ENCODE measurements at regions of chr19 and their contacts with region 1.

Region 1: GRCh38 chr19:58439576-58440554 is at the start of gene ZNF132:
- DNase-seq: peak; percentile 100
- ATAC-seq: peak; percentile 98
- H3K4me3 ChIP-seq: peak within 1 kb of the TSS; percentile 65
- H3K27ac ChIP-seq: peak within 1 kb of the TSS; percentile 61
- H3K4me1 ChIP-seq: peaks cover 3% of the 10 kb centered on the region; the same call in 1 of the 2 replicates
- H3K27me3 ChIP-seq: no peaks in the 10 kb centered on the region
- CTCF ChIP-seq: no peak
- POLR2A ChIP-seq: peak; percentile 87
- RAD21 ChIP-seq: no peak
- total RNA-seq, gene ZNF132: 8.9 and 13.6 TPM in 2 replicates

Region 2: GRCh38 chr19:58317476-58318072 is 122.3 kb before region 1 on chr19:
- CTCF ChIA-PET with region 1: no interaction called
- POLR2A ChIA-PET with region 1: no interaction called
- dilution Hi-C with region 1: no loop called
- in situ Hi-C with region 1: no loop called
- intact Hi-C with region 1: no loop called
- DNase-seq: peak; percentile 59
- ATAC-seq: peak; percentile 89
- H3K4me3 ChIP-seq: no peak overlapping the region
- H3K27ac ChIP-seq: no peak overlapping the region
- H3K4me1 ChIP-seq: no peaks in the 10 kb centered on the region
- H3K27me3 ChIP-seq: no peaks in the 10 kb centered on the region
- CTCF ChIP-seq: no peak
- POLR2A ChIP-seq: no peak
- RAD21 ChIP-seq: no peak

Region 3: DNA sequence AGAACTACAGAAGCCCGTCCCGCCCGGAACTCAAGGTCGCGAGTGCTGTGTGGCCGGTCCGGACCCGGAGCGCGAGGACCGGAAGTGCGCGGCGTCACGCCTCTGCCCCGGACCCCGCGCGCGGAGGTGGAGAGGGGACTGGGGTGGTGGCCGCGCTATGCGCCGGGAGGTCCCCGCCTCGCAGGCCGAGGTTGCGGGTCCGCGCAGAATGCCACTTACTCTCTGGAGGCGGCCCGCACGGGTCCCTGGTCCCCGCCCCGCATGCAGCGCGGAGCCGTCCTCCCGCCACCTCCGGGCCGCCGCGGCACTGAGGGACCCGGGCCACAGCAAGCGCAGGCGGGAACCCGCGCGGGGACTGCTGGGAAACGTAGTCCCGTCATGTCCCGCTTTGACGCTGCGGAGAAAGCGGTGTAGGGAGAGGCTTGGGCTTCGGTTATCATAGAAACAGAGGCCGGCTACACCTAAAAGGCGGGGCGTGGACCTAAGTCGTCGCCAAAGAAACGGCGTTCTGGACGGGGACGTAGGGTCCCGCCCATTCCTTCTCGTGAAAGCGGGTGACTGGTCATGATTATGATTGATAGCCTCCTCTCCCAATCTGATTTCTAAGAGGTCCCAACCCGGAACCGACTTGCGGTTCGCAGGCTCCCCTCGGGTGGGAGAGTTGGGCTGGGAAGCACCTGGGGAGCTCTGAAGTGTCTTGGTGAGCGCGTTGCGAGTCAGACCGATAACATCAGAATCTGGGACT is 59.0 kb before region 1 on chr19 and contains the start of gene ZNF837:
- CTCF ChIA-PET with region 1: no interaction called
- POLR2A ChIA-PET with region 1: no interaction called
- dilution Hi-C with region 1: no loop called
- in situ Hi-C with region 1: no loop called
- intact Hi-C with region 1: no loop called
- DNase-seq: peak; percentile 100
- ATAC-seq: peak; percentile 93
- H3K4me3 ChIP-seq: peak within 1 kb of the TSS; percentile 56
- H3K27ac ChIP-seq: peak within 1 kb of the TSS; percentile 66
- H3K4me1 ChIP-seq: peaks cover 13% of the 10 kb centered on the region
- H3K27me3 ChIP-seq: no peaks in the 10 kb centered on the region
- CTCF ChIP-seq: no peak
- POLR2A ChIP-seq: peak; percentile 67
- RAD21 ChIP-seq: no peak
- total RNA-seq, gene ZNF837: 0.54 and 0.56 TPM in 2 replicates

Region 4: GRCh38 chr19:58408152-58409009 is 31.5 kb before region 1 on chr19 and contains the start of gene ZNF584:
- CTCF ChIA-PET with region 1: no interaction called
- POLR2A ChIA-PET with region 1: no interaction called
- dilution Hi-C with region 1: no loop called
- in situ Hi-C with region 1: no loop called
- intact Hi-C with region 1: loop called (anchors 2 kb)
- DNase-seq: peak; percentile 93
- ATAC-seq: peak; percentile 98
- H3K4me3 ChIP-seq: peak within 1 kb of the TSS; percentile 95
- H3K27ac ChIP-seq: peak within 1 kb of the TSS; percentile 88
- H3K4me1 ChIP-seq: peaks cover 11% of the 10 kb centered on the region
- H3K27me3 ChIP-seq: no peaks in the 10 kb centered on the region
- CTCF ChIP-seq: 0 out of 2 replicates have a peak, but pooled peaks have one; percentile 9
- POLR2A ChIP-seq: peak; percentile 89
- RAD21 ChIP-seq: no peak
- total RNA-seq, gene ZNF584: 12.8 and 15.4 TPM in 2 replicates

Region 5: DNA sequence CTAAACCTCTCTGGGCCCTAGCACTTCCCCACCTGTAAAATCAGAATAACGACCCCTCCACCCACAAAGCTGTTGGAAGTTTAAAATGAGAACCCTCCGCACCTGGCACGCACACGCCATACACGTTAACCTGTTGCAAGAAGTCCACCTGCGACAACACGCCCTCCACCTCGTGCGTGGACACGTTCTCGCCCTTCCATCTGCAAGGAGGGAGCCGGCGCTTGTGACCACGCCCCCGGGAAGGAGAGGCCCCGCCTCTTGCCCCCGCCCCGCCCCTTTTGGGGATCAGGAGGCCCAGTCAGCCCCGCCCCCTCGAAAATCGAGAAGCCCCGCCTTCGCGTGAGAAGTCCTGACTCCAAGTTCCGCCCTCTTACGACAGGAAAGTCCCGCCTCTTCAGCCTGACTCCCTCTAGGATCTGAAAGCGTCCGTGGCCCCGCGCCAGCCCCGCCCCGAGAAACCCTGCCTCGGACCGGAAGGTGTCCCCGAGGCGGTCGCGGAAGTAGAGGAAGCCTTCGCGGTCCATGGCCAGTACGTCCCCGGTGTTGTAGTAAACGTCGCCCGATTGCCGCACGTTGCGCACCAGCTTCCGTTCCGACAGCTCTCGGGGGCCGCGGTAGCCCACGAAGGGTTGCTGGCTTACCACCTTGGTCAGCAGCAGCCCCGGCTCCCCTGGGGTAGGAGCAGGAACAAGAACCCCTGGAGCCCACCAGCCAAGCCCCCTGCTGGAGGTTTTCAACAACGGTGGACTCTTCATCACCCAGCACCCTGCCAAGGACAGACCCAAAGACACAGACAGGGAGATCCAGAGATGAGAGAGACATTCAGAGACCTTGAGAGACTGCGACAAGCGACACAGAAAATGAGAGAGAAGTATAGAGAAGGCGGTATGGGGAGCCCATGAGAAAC is 59.4 kb after region 1 on chr19:
- CTCF ChIA-PET with region 1: no interaction called
- POLR2A ChIA-PET with region 1: no interaction called
- dilution Hi-C with region 1: no loop called
- in situ Hi-C with region 1: no loop called
- intact Hi-C with region 1: no loop called
- DNase-seq: peak; percentile 98
- ATAC-seq: peak; percentile 98
- H3K4me3 ChIP-seq: peak overlapping the region; percentile 53
- H3K27ac ChIP-seq: peak overlapping the region; percentile 73
- H3K4me1 ChIP-seq: peaks cover 4% of the 10 kb centered on the region; the same call in 1 of the 2 replicates
- H3K27me3 ChIP-seq: no peaks in the 10 kb centered on the region
- CTCF ChIP-seq: peak; percentile 34
- POLR2A ChIP-seq: peak; percentile 48; the same call in 1 of the 2 replicates
- RAD21 ChIP-seq: peak; percentile 21; the same call in 1 of the 2 replicates